HepG2 (cell line): ENCODE measurements at regions of chr2 and their contacts with region 1.

Region 1: DNA sequence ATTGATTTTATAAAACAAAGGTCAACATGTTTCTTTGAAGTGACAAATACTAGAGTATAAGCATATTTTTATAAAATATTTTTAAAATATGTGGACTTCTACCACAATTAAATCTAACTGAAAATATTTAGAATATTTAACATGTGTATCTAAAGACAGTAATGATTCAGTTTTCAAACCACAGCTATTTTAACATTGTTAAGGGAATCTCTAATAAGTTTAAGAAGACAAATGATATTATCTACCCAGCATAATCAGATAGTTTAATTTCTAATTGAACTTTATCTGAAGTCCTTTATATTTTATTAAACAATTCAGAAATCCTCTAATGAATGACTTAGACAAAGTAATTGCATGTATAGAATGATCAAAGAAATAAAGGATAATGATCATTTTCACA is 96.2 kb downstream of the VWC2L start:
- DNase-seq: no peak
- ATAC-seq: no peak
- H3K4me3 ChIP-seq: no peak overlapping the region
- H3K27ac ChIP-seq: no peak overlapping the region
- H3K4me1 ChIP-seq: no peaks in the 10 kb centered on the region
- H3K27me3 ChIP-seq: no peaks in the 10 kb centered on the region
- CTCF ChIP-seq: no peak
- EP300 ChIP-seq: no peak
- POLR2A ChIP-seq: no peak
- RAD21 ChIP-seq: no peak

Region 2: DNA sequence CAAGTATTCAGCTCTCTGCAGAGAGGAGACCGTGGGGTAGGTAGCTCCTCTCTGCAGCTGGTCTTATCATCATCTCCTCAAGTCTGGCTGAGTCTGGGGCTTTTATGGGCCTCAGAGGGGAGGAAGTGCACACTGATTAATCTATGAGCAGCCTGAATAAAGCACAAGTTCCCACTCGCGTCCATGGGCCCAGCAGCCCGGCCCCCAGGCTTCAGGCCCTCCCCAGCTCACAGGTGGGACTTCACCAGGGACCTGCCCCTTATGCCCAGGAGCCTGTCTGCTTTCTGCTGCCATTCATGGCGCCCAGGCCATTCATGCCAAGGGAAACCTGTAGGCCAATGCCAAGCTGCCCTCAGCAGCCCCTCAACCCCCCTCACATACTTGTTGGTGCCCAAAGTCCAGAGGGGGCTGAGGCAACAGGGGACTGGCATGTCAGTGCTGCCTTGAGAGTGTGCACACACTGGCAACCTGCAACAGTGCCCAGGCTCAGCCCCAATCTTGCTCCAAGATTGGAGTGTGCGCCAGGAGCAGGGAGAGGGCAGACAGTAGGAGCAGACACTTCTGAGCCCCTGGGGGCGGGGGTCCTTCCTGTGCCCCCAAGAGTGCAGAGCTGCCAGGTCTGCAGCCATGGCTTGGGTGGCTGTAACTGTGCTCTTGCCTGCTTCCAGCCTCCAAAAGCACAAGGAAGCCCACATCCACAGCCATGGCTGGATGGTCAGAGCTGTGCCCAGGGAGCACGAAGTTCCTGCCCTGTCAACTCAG is 471.8 kb before region 1 on chr2:
- CTCF ChIA-PET with region 1: no interaction called
- POLR2A ChIA-PET with region 1: no interaction called
- in situ Hi-C with region 1: no loop called
- intact Hi-C with region 1: no loop called
- DNase-seq: no peak
- ATAC-seq: no peak; the same call in 1 of the 3 replicates
- H3K4me3 ChIP-seq: no peak overlapping the region
- H3K27ac ChIP-seq: no peak overlapping the region
- H3K4me1 ChIP-seq: no peaks in the 10 kb centered on the region
- H3K27me3 ChIP-seq: no peaks in the 10 kb centered on the region
- CTCF ChIP-seq: no peak
- EP300 ChIP-seq: no peak
- POLR2A ChIP-seq: no peak
- RAD21 ChIP-seq: no peak

Region 3: DNA sequence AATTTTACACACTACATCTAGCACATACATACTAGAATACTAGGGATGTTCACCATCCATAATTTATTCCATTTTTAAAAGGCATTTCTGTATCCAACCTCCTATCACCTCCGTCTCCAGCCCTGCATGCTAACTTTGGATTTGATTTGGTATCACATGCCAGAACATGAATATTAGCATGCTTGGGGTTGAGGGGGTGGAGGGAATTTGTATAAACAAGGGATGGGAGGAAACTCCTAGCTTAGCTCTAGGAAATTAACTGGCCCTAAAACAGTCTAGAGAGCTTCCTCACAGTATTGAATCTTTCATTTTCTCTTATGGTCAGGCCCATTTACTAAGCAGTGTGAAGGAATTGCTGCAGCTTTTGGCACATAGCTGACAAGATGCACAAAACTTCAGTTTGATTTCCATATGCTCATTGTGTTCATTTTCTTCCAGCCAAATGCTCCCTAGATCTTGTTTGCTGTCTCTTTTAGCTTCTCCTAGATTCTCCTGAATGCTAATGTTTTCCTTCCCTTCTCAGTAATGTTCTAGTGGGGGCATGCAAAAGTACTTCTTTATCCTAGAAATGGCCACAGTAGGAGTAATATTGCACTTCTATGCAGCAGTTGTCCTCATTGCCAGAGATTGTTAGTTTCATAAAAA is 39.0 kb after region 1 on chr2:
- CTCF ChIA-PET with region 1: no interaction called
- POLR2A ChIA-PET with region 1: no interaction called
- in situ Hi-C with region 1: no loop called
- intact Hi-C with region 1: loop called (anchors 1 kb)
- DNase-seq: no peak
- ATAC-seq: no peak
- H3K4me3 ChIP-seq: no peak overlapping the region
- H3K27ac ChIP-seq: no peak overlapping the region
- H3K4me1 ChIP-seq: no peaks in the 10 kb centered on the region
- H3K27me3 ChIP-seq: no peaks in the 10 kb centered on the region
- CTCF ChIP-seq: no peak
- EP300 ChIP-seq: no peak
- POLR2A ChIP-seq: no peak
- RAD21 ChIP-seq: no peak